ENCODE measurements at regions of chr19 and their contacts with region 1.

Region 1: DNA sequence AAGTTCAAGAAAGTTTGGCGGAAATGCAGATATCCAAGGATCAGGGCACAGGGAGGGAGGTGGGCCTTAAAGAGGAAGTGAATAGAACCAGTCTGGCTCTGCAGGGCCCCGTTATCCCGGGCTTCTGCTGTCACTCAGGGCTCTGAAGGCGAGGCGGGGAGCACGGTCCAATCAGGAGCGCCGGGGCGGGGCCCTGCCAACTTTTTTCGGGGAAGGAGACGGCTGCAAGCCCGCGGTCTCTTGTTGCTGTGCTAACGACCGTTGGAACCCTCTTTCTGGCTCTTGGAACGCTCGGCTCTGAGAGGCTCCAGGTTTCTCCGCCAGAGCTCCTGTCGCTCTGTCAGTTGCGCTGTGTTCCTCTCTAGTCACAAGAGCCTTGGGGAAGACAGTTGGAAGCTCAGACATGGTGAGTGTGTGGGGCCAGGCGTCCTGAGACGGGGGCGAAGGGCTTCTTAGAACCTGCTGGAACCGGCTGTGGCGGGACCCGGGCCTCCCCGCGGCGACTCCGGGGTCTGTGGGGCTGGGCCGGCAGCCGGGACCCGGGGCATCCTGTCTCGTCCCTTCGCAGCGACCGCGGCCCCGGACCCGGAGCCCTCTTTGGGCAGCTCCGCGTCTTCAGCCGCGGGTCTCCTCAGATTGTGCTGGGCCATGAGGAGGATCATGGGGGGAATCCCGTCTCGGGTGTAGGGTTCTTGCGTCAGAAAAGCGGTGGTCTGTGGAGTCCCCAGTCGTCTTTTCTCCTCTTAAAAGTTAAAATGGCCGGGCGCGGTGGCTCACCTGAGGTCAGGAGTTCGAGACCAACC is 27.7 kb downstream of the ZNF844 start:
- DNase-seq: peak; percentile 7 to 43 (median 11)
- H3K4me3 ChIP-seq: peak overlapping the region; percentile 39
- H3K4me3 Mint-ChIP-seq: peak overlapping the region; percentile 60 to 83 (median 75)
- H3K27ac ChIP-seq: peak overlapping the region; percentile 54
- H3K27ac Mint-ChIP-seq: no peak overlapping the region
- H3K4me1 ChIP-seq: no peaks in the 10 kb centered on the region
- H3K4me1 Mint-ChIP-seq: peaks cover 8 to 14% (median 10%) of the 10 kb centered on the region in 3 donors
- H3K27me3 ChIP-seq: no peaks in the 10 kb centered on the region
- H3K27me3 Mint-ChIP-seq: peaks cover 23 to 27% of the 10 kb centered on the region in 2 donors

Region 2: DNA sequence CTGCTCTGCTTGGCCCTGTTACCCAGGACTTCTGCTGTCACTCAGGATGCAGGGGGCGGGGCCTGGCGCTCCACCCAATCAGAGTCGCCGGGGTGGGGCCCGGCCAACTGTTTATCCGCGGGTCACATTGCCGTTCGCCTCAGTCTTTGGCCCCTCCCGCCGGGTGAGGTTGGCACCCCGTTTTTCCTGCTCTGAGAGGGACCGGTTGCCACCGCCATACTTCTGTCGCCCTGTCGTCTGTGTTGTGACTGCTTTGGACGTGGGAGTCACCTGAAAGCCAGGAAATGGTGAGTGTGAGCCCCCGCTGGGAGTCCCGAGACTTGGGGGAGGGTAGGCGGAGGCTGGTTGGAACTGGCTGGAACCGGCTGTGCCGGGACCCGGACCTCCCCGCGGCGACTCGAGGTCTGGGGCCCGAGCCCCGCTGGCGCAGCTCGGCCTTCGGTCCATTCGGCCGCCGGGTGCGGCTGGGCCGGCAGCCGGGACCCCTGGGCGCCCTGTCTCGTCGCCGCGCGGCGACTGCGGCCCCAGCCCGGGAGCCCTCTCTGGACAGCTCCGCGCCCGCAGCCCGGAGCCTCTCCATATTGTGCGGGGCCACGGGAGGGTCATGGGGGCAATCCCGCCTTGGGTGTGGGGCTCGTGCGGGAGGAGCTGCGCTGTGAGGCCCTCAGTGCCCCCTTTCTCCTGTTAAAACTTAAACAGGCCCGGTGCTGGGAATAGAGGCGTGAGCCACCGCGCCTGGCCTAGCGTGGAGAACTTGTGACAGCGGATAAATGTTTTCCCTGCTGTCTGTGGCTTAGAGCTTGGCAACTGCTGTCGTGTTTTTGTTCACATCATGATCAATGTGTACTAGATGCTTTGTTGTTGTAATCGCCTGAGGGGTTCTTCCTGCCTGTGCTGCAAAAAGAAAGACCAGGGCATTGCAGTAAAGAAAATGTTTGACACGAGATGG is 27.4 kb before region 1 on chr19 and contains the start of gene ZNF844:
- CTCF ChIA-PET with region 1: interaction called, 10 read pairs
- POLR2A ChIA-PET with region 1: no interaction called
- DNase-seq: peak; percentile 46 to 76 (median 52)
- H3K4me3 ChIP-seq: peak within 1 kb of the TSS; percentile 66
- H3K4me3 Mint-ChIP-seq: peak within 1 kb of the TSS; percentile 80 to 91 (median 85)
- H3K27ac ChIP-seq: peak within 1 kb of the TSS; percentile 51
- H3K27ac Mint-ChIP-seq: peak within 1 kb of the TSS in 6 of 8 donors; percentile 60 to 95 (median 66)
- H3K4me1 ChIP-seq: no peaks in the 10 kb centered on the region
- H3K4me1 Mint-ChIP-seq: peaks cover 5 to 16% (median 14%) of the 10 kb centered on the region in 3 donors
- H3K27me3 ChIP-seq: no peaks in the 10 kb centered on the region
- H3K27me3 Mint-ChIP-seq: no peaks in the 10 kb centered on the region
- total RNA-seq, gene ZNF844: 5.4 to 5.7 TPM

Region 3: DNA sequence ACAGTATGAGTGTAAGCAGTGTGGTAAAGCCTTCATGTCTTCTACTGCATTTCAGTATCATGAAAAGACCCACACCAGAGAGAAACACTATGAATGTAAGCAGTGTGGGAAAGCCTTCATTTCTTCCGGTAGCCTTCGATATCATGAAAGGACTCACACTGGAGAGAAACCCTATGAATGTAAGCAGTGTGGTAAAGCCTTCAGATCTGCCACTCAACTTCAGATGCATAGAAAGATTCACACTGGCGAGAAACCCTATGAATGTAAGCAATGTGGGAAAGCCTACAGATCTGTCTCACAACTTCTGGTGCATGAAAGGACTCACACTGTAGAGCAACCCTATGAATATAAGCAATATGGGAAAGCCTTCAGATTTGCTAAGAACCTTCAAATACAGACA is 14.9 kb before region 1 on chr19:
- CTCF ChIA-PET with region 1: no interaction called
- POLR2A ChIA-PET with region 1: no interaction called
- DNase-seq: no peak
- H3K4me3 ChIP-seq: no peak overlapping the region
- H3K4me3 Mint-ChIP-seq: no peak overlapping the region
- H3K27ac ChIP-seq: no peak overlapping the region
- H3K27ac Mint-ChIP-seq: no peak overlapping the region
- H3K4me1 ChIP-seq: no peaks in the 10 kb centered on the region
- H3K4me1 Mint-ChIP-seq: no peaks in the 10 kb centered on the region
- H3K27me3 ChIP-seq: no peaks in the 10 kb centered on the region
- H3K27me3 Mint-ChIP-seq: no peaks in the 10 kb centered on the region